Activated T-helper 2 cell treated with anti-CD3 and anti-CD28 coated beads, Interferon-gamma antibody, Interleukin-2, Interleukin-4, amounts not matched to agents 10 μg/mL and 5 μg/mL and 100 μg/mL, durations not matched to agents 14 hours and 24 hours and 36 hours (primary cell): ENCODE measurements at regions of chr7 and their contacts with region 1.

Region 1: GRCh38 chr7:129652914-129653313 is 41.4 kb downstream of the NRF1 start:
- DNase-seq: no peak
- H3K4me3 Mint-ChIP-seq: no peak overlapping the region
- H3K27ac Mint-ChIP-seq: no peak overlapping the region
- H3K4me1 Mint-ChIP-seq: peaks cover 24% of the 10 kb centered on the region
- H3K27me3 Mint-ChIP-seq: no peaks in the 10 kb centered on the region

Region 2: GRCh38 chr7:129780257-129780973 is 127.5 kb after region 1 on chr7:
- intact Hi-C with region 1: loop called (anchors 5 kb)
- DNase-seq: peak; percentile 44
- H3K4me3 Mint-ChIP-seq: peak overlapping the region; percentile 58
- H3K27ac Mint-ChIP-seq: no peak overlapping the region
- H3K4me1 Mint-ChIP-seq: peaks cover 22% of the 10 kb centered on the region
- H3K27me3 Mint-ChIP-seq: peaks cover 61% of the 10 kb centered on the region

Region 3: GRCh38 chr7:129923709-129924108 is 270.8 kb after region 1 on chr7:
- intact Hi-C with region 1: no loop called
- DNase-seq: no peak
- H3K4me3 Mint-ChIP-seq: no peak overlapping the region
- H3K27ac Mint-ChIP-seq: peak overlapping the region; percentile 43
- H3K4me1 Mint-ChIP-seq: peaks cover 16% of the 10 kb centered on the region
- H3K27me3 Mint-ChIP-seq: no peaks in the 10 kb centered on the region

Region 4: DNA sequence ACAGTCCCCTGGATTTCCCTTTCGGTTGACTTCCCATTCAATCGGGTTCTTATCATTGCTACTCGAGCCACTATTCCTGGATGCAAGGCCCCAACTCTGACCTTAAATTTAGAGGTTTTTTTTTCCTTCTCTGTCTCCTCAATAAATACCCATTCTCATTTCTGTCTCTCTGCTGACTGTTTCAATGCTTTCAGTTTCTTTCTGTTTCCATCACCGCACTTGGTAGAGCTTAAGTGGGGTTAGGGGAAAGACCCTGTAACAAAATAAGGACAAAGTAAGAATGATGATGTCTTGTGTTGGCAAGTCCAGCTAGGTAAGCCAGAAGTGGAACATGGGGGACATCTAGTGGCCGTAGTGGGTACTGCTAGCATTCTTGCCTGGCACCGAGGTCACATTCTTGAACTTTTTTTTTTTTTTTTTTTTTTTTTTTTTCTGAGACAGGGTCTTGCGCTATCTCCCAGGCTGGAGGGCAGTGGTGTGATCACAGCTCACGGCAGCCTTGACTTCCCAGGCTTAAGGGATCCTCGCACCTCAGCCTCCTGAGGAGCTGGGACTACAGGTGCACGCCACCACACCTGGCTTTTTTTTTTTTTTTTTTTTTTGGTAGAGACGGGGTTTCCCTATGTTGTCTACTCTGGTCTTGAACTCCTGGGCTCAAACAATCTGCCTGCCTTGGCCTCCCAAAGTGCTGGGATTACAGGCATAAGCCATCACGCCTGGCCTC is 357.9 kb after region 1 on chr7:
- intact Hi-C with region 1: loop called (anchors 10 kb)
- DNase-seq: peak; percentile 77
- H3K4me3 Mint-ChIP-seq: no peak overlapping the region
- H3K27ac Mint-ChIP-seq: peak overlapping the region; percentile 76
- H3K4me1 Mint-ChIP-seq: peaks cover 7% of the 10 kb centered on the region
- H3K27me3 Mint-ChIP-seq: no peaks in the 10 kb centered on the region